ENCODE measurements at regions of chr18 and their contacts with region 1.

Region 1: DNA sequence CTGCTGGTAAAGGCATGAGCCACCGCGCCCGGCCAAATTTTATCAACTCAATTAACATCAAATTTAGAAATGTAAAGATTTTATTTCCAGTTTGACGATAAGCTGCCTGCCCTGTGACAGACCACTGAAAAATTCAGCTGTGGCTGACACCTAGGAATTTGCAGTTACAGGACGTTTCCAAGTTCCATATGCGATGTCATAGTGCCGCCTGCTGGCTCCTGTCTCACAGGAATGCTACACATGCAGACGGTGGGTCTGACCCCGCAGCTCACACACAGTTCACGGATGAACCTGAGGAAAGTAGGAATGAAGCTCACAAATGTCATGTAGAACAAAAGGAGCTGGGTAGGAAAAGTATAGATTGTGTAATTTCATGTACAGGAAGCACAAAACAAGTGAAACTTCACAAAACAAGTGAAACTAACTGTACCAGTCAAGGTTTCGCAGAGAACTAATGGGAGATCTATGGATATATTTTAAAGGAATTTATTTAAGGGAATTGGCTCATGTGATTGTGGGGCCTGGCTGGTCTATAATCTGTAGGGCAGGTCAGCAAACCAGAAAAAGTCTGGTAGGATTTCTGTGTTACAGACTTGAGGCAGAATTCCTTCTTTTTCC is 13.2 kb upstream of the SEH1L start:
- DNase-seq: peak; percentile 63
- H3K4me3 ChIP-seq: no peak overlapping the region
- H3K27ac ChIP-seq: no peak overlapping the region
- H3K27me3 ChIP-seq: no peaks in the 10 kb centered on the region
- CTCF ChIP-seq: peak; percentile 97

Region 2: DNA sequence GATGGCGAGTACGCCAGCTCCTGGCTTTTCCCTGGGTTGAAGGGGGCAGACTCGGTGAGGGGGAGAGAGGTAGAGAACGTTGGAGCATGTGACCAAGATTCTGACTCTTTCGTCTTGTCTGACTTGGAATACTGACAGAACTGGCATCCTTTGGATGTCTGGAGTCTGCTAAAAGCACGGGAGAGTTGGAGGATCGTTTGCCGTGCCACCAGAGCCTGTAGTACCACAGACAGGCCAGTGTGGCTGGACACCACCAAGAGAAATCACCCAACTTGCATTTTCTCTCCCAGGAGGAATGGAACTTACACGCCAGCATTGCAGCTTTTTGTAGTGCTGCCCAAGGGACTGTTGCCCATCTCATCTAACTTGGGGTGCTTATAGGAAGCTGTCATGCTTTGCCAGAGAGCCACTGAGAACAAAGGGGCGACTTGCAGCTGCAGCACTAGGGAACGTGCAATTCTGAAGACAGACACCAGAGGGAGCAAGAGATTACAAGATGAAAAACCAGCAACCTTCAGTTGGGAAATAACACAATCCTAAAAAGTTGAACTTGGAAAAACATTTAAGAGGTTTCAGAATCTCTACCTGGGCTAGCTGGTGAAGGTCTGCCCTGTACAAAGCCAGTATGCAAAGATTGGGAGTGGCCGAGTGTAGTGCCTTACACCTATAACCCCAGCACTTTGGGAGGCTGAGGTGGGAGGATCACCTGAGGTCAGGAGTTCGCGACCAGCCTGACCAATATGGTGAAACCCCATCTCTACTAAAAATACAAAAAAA is 207.6 kb before region 1 on chr18:
- CTCF ChIA-PET with region 1: interaction called, 232 read pairs
- POLR2A ChIA-PET with region 1: interaction called, 4 read pairs
- DNase-seq: peak; percentile 60
- H3K4me3 ChIP-seq: no peak overlapping the region
- H3K27ac ChIP-seq: no peak overlapping the region
- H3K27me3 ChIP-seq: no peaks in the 10 kb centered on the region
- CTCF ChIP-seq: peak; percentile 89

Region 3: GRCh38 chr18:12744103-12744502 is 190.5 kb before region 1 on chr18:
- CTCF ChIA-PET with region 1: interaction called, 128 read pairs
- POLR2A ChIA-PET with region 1: no interaction called
- DNase-seq: peak; percentile 47
- H3K4me3 ChIP-seq: no peak overlapping the region
- H3K27ac ChIP-seq: no peak overlapping the region
- H3K27me3 ChIP-seq: no peaks in the 10 kb centered on the region
- CTCF ChIP-seq: peak; percentile 73

Region 4: GRCh38 chr18:12750076-12750714 is 184.4 kb before region 1 on chr18:
- CTCF ChIA-PET with region 1: interaction called, 128 read pairs
- POLR2A ChIA-PET with region 1: no interaction called
- DNase-seq: no peak
- H3K4me3 ChIP-seq: no peak overlapping the region
- H3K27ac ChIP-seq: no peak overlapping the region
- H3K27me3 ChIP-seq: no peaks in the 10 kb centered on the region
- CTCF ChIP-seq: no peak

Region 5: GRCh38 chr18:12911025-12911928 is 23.3 kb before region 1 on chr18:
- CTCF ChIA-PET with region 1: interaction called, 27 read pairs
- POLR2A ChIA-PET with region 1: no interaction called
- DNase-seq: no peak
- H3K4me3 ChIP-seq: no peak overlapping the region
- H3K27ac ChIP-seq: no peak overlapping the region
- H3K27me3 ChIP-seq: peaks cover 14% of the 10 kb centered on the region
- CTCF ChIP-seq: no peak

Region 6: DNA sequence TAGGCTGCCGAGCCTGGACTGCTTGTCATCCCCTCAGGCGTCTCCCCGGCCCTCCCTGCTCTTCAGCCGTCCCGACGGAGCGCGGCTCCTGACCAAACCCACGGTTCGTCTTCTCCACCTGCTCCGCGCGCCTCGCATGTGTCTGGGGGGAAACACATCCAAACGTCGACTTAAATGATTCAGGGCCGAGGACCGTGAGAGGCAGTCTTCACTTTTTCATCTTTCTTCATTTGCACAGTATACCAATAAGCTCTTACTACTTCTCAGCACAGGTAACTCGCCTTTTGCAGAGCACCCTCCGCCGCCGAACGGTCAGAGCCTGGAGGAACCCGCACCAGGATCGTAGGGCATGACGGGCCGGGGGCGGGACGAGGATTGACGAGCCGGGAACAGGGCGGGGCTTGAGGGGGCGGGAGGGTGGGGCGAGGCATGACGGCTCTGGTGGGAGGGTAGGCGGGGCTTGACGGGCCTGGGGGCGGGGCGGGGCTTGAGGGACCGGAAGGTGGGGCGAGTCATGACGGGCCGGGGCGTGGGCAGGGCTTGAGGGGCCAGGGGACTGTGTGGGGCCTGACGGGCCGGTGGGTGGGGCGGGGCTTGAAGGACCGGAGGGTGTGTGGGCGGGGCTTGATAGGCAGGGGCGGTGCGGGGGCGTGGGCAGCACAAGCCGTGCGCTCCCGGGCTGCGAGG is 12.9 kb after region 1 on chr18 and contains the start of gene SEH1L:
- CTCF ChIA-PET with region 1: interaction called, 39 read pairs
- POLR2A ChIA-PET with region 1: no interaction called
- DNase-seq: peak; percentile 98
- H3K4me3 ChIP-seq: peak within 1 kb of the TSS; percentile 94
- H3K27ac ChIP-seq: peak within 1 kb of the TSS; percentile 99
- H3K27me3 ChIP-seq: no peaks in the 10 kb centered on the region
- CTCF ChIP-seq: no peak
- polyA plus RNA-seq, gene SEH1L: 47.9 and 54.6 TPM in 2 replicates